ENCODE measurements at regions of chr7 and their contacts with region 1.

Region 1: DNA sequence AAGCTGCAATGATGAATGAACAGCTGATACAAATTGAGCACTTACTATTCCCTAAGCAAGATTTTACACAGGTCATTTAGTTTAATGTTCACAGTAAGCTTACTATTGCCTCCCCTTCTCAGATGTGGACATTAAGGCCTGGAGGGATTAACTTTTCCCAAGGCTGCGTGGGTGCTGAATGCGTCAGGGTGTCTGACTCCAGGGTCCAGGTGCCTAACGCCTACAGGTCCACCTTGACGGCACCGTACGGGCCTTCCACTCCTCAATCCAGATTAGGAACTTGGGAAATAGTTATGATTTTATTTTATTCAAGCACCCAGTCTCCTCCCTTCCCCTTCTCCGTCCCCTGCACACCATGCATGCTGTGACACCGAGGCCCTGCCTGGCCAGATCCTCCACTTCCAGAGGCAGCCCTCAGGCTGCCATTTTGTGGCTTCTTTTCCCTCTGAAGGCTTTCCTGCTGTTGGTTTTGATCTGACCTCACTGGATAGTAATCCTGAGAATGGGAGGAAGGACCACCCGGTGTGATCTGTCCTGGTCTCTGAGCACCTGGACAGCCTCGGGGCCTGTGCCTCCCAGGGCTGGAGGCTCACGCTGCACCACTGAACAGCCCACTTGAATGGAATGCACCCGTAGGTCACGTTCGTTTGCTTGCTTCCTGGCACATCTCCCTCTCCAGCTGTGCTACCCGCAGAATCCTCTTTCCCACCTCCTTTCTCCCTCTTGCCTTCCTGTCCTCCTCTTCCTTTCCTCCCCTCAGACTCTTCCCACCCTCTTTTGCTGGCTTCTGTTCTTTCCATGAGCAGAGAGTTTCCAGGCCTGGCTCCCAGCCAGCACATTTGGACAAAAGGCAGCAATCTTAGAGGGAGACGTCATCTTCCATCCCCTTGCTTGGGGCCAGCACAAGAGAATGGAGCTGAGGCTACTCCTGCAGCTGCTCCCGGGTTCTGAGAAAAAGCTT is 14.4 kb downstream of the DENND2A start:
- DNase-seq: peak; percentile 100
- ATAC-seq: peak; percentile 90
- H3K4me3 ChIP-seq: no peak overlapping the region
- H3K27ac ChIP-seq: peak overlapping the region; percentile 80
- H3K4me1 ChIP-seq: peaks cover 19% of the 10 kb centered on the region
- H3K27me3 ChIP-seq: no peaks in the 10 kb centered on the region
- CTCF ChIP-seq: no peak
- POLR2A ChIP-seq: no peak
- RAD21 ChIP-seq: no peak

Region 2: GRCh38 chr7:140564643-140565042 is 61.5 kb before region 1 on chr7:
- CTCF ChIA-PET with region 1: no interaction called
- POLR2A ChIA-PET with region 1: no interaction called
- dilution Hi-C with region 1: no loop called
- in situ Hi-C with region 1: no loop called
- intact Hi-C with region 1: loop called (anchors 1 kb)
- DNase-seq: no peak
- ATAC-seq: no peak
- H3K4me3 ChIP-seq: no peak overlapping the region
- H3K27ac ChIP-seq: no peak overlapping the region
- H3K4me1 ChIP-seq: peaks cover 14% of the 10 kb centered on the region
- H3K27me3 ChIP-seq: no peaks in the 10 kb centered on the region
- CTCF ChIP-seq: no peak
- POLR2A ChIP-seq: no peak
- RAD21 ChIP-seq: no peak

Region 3: DNA sequence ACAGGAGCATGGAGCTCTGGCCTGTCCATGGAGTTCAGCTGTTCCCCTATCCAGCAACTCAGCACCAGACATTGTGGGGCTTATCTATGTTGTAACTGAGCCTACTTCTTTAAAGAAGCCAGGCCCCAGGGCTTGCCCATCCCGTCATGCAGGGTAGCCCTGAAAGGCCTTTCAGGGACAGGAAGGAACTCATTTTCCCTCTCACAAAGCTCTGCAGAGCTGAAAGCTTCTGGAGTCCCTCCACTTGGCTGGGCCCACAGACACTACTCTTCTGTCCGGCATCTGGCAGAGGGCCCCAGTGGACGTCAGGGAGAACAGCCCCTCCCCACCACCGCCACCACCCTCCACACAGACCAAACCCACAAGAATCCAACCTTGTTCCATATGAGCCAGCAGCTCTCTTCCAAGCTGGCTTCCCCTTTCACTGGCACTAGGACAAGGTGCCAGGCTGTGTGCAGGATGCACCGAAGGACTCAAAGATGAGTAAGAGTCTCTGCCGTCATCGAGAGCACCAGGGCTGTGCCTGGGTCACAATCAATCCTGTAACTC is 18.7 kb before region 1 on chr7:
- CTCF ChIA-PET with region 1: interaction called, 3 read pairs
- POLR2A ChIA-PET with region 1: interaction called, 3 read pairs
- dilution Hi-C with region 1: no loop called
- in situ Hi-C with region 1: no loop called
- intact Hi-C with region 1: loop called (anchors 1 kb)
- DNase-seq: peak; percentile 91
- ATAC-seq: peak; percentile 30
- H3K4me3 ChIP-seq: no peak overlapping the region
- H3K27ac ChIP-seq: peak overlapping the region; percentile 80
- H3K4me1 ChIP-seq: peaks cover 34% of the 10 kb centered on the region
- H3K27me3 ChIP-seq: no peaks in the 10 kb centered on the region
- CTCF ChIP-seq: no peak
- POLR2A ChIP-seq: no peak
- RAD21 ChIP-seq: 0 out of 2 replicates have a peak, but pooled peaks have one; percentile 14